PC-3 (cell line): ENCODE measurements at regions of chr7 and their contacts with region 1.

Region 1: GRCh38 chr7:54967384-54967783 is 51.4 kb upstream of the EGFR start:
- DNase-seq: peak; percentile 98
- ATAC-seq: peak; percentile 72
- H3K4me3 ChIP-seq: no peak overlapping the region
- H3K27ac ChIP-seq: peak overlapping the region; percentile 84
- H3K4me1 ChIP-seq: peaks cover 55% of the 10 kb centered on the region
- H3K27me3 ChIP-seq: no peaks in the 10 kb centered on the region
- CTCF ChIP-seq: no peak

Region 2: GRCh38 chr7:54985405-54986330 is 18.3 kb after region 1 on chr7:
- CTCF ChIA-PET with region 1: no interaction called
- POLR2A ChIA-PET with region 1: interaction called, 3 read pairs
- intact Hi-C with region 1: loop called (anchors 1 kb)
- DNase-seq: peak; percentile 96
- ATAC-seq: peak; percentile 97
- H3K4me3 ChIP-seq: peak overlapping the region; percentile 21
- H3K27ac ChIP-seq: peak overlapping the region; percentile 93
- H3K4me1 ChIP-seq: peaks cover 38% of the 10 kb centered on the region
- H3K27me3 ChIP-seq: no peaks in the 10 kb centered on the region
- CTCF ChIP-seq: no peak

Region 3: GRCh38 chr7:54995631-54996340 is 28.4 kb after region 1 on chr7:
- CTCF ChIA-PET with region 1: no interaction called
- POLR2A ChIA-PET with region 1: no interaction called
- intact Hi-C with region 1: loop called (anchors 1 kb)
- DNase-seq: peak; percentile 96
- ATAC-seq: peak; percentile 94
- H3K4me3 ChIP-seq: peak overlapping the region; percentile 9; the same call in 1 of the 2 replicates
- H3K27ac ChIP-seq: peak overlapping the region; percentile 91
- H3K4me1 ChIP-seq: peaks cover 28% of the 10 kb centered on the region
- H3K27me3 ChIP-seq: no peaks in the 10 kb centered on the region
- CTCF ChIP-seq: no peak

Region 4: DNA sequence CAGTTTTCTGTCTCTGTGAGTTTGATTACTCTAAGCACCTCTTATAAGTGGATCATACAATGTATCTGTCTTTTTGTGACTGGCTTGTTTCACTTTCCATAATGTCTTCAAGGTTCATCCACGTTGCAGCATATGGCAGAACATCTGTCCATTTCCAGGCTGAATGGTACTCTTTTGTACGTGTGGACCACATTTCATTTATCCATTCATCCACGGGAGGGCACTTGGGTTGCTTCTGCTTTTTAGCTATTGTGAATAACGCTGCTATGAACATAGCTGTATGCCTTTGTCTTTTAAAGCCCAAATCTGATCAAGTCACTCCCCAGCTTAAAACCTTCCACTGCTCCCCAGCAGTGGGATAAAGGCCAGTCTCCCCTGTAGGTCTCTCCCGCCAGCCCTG is 82.9 kb after region 1 on chr7:
- CTCF ChIA-PET with region 1: no interaction called
- POLR2A ChIA-PET with region 1: no interaction called
- intact Hi-C with region 1: no loop called
- DNase-seq: no peak
- ATAC-seq: no peak
- H3K4me3 ChIP-seq: no peak overlapping the region
- H3K27ac ChIP-seq: no peak overlapping the region
- H3K4me1 ChIP-seq: peaks cover 47% of the 10 kb centered on the region
- H3K27me3 ChIP-seq: no peaks in the 10 kb centered on the region
- CTCF ChIP-seq: no peak

Region 5: GRCh38 chr7:55073945-55074499 is 106.6 kb after region 1 on chr7:
- CTCF ChIA-PET with region 1: no interaction called
- POLR2A ChIA-PET with region 1: no interaction called
- intact Hi-C with region 1: loop called (anchors 10 kb)
- DNase-seq: peak; percentile 98
- ATAC-seq: peak; percentile 98
- H3K4me3 ChIP-seq: peak overlapping the region; percentile 48; the same call in 1 of the 2 replicates
- H3K27ac ChIP-seq: peak overlapping the region; percentile 97
- H3K4me1 ChIP-seq: peaks cover 38% of the 10 kb centered on the region
- H3K27me3 ChIP-seq: no peaks in the 10 kb centered on the region
- CTCF ChIP-seq: no peak